Activated naive CD4-positive, alpha-beta T cell treated with anti-CD3 and anti-CD28 coated beads, Interleukin-2, amount 10 ng/mL, durations not matched to agents 7 days and 5 days (primary cell): ENCODE measurements at regions of chr20 and their contacts with region 1.

Region 1: DNA sequence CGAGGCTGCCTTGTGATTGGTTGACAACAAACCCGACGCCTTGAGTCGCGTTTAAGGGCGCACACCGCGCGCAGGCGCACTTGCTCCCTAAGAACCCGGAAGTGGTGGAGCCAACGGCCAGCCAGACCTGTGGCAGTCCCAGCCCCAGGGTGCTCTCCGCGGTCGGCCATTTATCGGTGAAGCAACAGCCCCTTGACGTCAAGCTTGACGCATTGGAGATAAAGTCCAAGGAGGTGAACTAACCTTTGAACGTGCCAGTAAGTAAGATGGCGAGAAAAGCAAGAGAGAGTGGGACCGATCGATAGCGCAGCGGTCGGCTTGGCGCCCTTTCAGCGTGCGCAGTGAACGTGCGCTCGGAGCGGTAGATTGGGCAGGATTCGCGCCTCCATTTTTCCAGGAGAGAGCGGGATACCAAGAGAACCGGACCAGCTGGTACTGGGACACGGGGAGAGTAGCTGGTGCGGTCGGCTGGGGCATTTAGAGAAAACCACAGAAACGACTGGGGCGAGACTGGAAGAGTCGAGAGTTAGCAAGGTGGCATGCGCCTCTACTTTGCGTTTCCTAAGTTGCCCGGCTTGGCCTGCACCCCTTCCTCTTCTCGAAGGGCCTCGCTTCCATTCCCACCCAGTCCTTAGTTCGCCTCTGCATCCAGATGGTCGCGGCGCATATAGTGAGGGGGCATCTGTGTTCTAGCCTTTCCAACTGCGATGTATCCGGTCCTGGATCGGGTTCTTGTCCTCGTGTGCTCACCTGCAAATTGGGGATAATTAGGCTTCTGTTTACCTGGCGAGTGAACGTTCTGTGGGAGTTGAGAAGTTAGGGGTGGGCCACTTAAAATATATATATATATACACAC is at the start of gene CSTF1:
- DNase-seq: peak; percentile 99
- H3K4me3 Mint-ChIP-seq: no peak within 1 kb of the TSS
- H3K27ac Mint-ChIP-seq: no peak within 1 kb of the TSS
- H3K4me1 Mint-ChIP-seq: peaks cover 61% of the 10 kb centered on the region
- H3K27me3 Mint-ChIP-seq: no peaks in the 10 kb centered on the region

Region 2: DNA sequence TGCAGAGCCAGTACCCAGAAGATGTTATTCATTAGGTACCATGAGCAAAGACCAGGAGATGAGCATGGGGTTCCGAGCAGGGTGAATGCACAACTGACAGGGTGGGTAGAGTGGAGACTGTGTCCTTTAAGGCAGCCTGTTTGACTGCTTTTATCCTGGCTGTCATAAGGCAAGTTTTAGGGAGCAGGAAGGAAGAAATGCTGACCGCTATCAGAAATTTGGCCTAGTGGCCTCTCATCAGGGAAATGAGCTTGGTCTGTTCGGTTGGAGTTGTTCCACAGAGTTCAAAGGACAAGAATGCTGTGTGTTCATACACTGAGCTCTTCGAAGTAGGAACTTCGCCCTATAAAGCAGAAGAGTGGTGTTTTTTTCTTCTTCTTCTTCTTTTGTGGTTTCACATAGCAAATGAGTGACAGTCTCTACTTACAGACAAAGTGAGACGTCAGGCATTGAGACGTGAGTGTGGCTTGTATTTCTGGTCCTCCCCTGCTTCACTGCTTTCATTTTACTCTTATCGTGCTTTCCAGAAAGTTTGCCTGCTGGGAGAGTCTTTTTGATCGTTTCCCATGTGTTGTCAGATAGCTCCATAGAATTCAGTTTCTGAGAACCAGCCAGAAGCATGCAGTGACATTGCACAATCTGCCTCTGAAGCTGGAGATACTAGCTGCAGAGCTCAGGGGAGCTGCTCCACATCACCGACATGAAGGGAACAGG is 19.4 kb after region 1 on chr20 and contains the start of gene CASS4:
- CTCF ChIA-PET with region 1: interaction called, 19 read pairs
- DNase-seq: peak; percentile 57
- H3K4me3 Mint-ChIP-seq: peak within 1 kb of the TSS; percentile 81
- H3K27ac Mint-ChIP-seq: peak within 1 kb of the TSS; percentile 93
- H3K4me1 Mint-ChIP-seq: peaks cover 61% of the 10 kb centered on the region
- H3K27me3 Mint-ChIP-seq: no peaks in the 10 kb centered on the region